ENCODE measurements at regions of chr15 and their contacts with region 1.

Region 1: DNA sequence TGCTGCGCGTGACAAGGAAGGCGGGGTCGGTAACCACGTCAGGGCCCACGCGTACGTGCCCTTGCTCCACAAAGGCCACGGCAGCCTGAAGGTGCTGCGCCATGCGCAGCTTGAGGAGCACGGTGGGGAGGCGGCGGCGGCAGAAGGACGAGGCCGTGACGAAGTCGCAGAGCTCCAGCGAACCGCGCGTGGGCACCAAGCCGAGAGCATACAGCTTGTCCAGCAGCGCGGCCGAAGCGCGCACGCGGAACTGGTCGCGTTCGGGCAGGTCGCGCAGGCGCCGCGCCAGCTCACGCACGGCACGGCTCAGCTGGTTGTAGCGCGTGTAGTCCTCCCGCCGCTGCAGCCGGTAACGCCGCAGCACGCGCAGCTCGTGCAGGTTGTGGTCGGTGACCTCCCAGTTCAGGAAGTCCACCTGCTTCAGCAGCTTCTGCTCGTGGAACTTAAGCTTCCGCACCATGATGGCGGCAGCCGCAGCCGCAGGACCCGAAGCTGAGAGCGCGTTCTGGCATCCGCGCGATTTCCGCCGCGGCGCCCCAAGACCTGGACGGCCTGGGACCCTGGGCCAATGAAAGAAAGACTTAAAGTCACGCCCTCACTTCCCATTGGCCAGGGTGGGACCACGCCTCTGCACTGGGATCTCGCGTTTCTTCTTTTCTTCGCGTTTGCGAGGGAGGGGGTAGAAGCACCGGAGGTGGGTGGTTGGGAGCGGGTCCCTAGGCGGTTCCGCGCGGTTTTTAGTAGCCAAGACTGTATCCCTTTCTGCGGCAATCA is at the start of gene IMP3:
- DNase-seq: peak; percentile 98
- H3K4me3 ChIP-seq: peak within 1 kb of the TSS; percentile 84 to 94
- H3K27ac ChIP-seq: peak within 1 kb of the TSS; percentile 81 to 93
- H3K4me1 ChIP-seq: peaks cover 13% of the 10 kb centered on the region
- H3K27me3 ChIP-seq: no peaks in the 10 kb centered on the region
- CTCF ChIP-seq: no peak
- POLR2A ChIP-seq: peak; percentile 93
- total RNA-seq, gene IMP3: 87.5 to 111 TPM

Region 2: GRCh38 chr15:74816808-74817674 is 822.9 kb before region 1 on chr15:
- intact Hi-C with region 1: no loop called
- DNase-seq: peak; percentile 67
- H3K4me3 ChIP-seq: peak overlapping the region in 1 of 2 donors; percentile 15
- H3K27ac ChIP-seq: no peak overlapping the region
- H3K4me1 ChIP-seq: peaks cover 6% of the 10 kb centered on the region
- H3K27me3 ChIP-seq: no peaks in the 10 kb centered on the region
- CTCF ChIP-seq: peak in 2 of 3 experiments; percentile 17 to 29
- POLR2A ChIP-seq: no peak

Region 3: DNA sequence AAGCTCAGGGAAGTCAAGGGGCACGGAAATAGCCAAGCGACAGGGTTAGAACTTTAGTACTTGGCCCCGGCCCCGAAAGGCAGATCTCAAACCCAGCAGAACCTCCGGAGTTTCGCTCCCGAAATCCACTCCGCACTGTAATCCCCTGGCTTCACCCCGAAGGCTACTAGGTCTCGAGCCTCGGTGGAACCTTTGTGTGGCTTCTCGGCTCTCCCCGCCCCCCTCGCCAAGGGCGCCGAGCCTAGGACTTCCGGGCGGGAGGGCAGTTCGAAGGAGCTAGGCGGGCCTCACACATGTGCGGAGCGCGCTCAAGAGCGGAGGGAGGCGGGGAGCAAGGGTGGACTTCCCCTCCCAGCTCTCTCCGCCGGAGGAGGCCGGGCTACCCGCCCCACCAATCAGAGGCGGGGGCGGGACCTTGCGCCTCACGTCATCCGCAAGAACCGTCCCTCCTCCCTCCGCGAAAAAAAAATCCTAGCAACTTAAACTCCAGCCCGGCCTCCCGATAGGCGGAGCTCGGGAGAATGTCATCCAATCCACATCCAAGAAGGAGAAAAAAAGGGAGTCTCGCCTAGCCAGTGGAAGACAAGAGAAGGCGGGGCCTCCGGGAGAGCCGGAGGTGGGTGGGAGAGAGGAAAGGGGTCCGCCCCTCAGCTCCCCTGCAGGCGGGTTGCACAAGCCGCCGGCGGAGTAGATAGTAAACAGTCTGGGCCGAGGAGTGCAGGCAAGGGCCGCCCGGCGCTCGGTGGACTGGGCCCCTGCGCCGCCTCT is 186.0 kb before region 1 on chr15:
- intact Hi-C with region 1: loop called (anchors 10 kb)
- DNase-seq: peak; percentile 98
- H3K4me3 ChIP-seq: peak overlapping the region; percentile 90 to 97
- H3K27ac ChIP-seq: peak overlapping the region; percentile 94 to 99
- H3K4me1 ChIP-seq: peaks cover 21% of the 10 kb centered on the region
- H3K27me3 ChIP-seq: no peaks in the 10 kb centered on the region
- CTCF ChIP-seq: no peak
- POLR2A ChIP-seq: peak; percentile 34

Region 4: DNA sequence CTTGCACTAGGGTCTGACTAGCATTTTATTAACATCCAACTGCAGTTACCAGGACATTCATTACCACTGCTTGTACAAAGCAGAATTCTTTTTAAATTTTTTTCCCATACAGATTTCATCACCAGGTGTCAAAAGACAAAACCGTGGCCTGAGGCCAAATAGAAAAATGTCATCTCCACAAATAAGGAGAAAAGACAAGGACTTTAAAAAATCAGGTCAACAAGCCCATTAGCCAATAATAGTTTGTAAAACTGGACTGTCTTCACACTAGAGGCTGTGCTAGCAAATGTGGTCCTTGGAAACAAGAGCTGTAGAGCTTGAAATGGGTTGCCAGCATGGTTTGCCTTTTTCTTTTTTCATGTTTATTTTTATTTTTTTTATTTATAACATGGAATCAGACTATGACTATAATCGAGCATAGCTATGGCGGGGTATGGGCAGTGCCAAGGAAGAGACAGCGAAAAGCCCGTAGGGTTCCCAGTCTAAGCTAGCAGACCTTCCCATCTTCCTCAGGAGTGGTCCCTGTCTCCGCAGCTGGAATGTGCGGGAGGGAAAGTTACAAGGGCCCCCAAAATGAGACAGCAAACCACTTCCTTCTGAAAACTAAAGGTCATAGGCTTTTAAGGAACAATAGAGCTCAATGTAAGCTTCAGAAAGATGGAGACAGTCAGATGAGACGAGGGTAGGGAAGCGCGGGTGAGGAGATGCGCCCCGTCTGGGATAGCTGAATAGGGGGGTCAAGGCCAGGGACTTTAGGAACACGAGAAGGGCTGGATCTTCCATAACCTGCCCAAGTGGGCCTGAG is 62.3 kb before region 1 on chr15:
- intact Hi-C with region 1: no loop called
- DNase-seq: peak; percentile 30
- H3K4me3 ChIP-seq: peak overlapping the region; percentile 71 to 76
- H3K27ac ChIP-seq: peak overlapping the region; percentile 87 to 96
- H3K4me1 ChIP-seq: peaks cover 9% of the 10 kb centered on the region
- H3K27me3 ChIP-seq: no peaks in the 10 kb centered on the region
- CTCF ChIP-seq: no peak
- POLR2A ChIP-seq: no peak